ENCODE measurements at regions of chr7 and their contacts with region 1.

Region 1: DNA sequence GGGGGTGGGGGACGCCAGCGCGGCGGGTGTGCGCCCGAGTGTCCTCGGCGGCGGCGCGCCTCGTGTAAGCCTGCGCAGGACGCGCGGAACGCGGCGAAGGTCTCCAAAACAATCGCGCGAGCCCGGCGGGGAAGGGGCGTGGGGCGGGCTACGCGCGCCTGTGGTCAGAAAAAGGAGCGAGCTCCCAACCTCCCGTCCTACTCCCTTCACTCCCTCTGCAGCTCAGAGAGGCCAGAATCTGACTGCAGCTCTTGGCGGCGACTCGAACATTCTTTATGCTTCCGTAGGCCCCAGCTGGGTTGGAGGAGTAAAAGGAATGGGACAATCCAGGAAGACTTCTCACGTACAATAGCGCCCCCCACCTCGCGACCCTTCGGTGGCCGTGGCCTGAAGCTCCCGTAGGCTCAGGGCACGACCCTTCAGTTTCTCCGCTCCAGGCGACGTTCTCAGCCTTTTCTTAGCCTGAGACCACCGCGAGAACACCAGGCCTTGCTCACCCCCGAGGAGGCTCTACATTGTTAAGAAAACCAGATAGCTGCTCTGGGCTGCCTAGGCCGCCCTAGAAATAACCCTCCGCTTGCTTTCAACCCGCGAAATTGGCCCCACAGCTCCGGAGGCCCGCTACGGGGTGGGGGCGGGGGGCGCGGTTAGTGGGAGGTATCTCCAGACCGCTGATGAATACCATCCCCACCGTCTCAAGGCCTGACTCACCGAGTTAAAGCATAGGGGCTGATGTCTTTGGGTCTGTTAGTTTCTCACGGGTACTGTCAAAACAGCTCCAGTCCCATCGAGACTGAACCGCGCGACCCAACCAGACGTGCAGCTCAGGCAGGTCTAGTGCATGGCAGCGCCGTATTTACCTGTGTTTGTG is 3.1 kb downstream of the DLX5 start:
- DNase-seq: no peak
- H3K4me3 Mint-ChIP-seq: no peak overlapping the region
- H3K27ac Mint-ChIP-seq: no peak overlapping the region
- H3K4me1 Mint-ChIP-seq: peaks cover 18% of the 10 kb centered on the region
- H3K27me3 Mint-ChIP-seq: peaks cover 92% of the 10 kb centered on the region

Region 2: GRCh38 chr7:96300502-96300901 is 721.1 kb before region 1 on chr7:
- intact Hi-C with region 1: no loop called
- DNase-seq: no peak
- H3K4me3 Mint-ChIP-seq: no peak overlapping the region
- H3K27ac Mint-ChIP-seq: no peak overlapping the region
- H3K4me1 Mint-ChIP-seq: peaks cover 48% of the 10 kb centered on the region
- H3K27me3 Mint-ChIP-seq: no peaks in the 10 kb centered on the region

Region 3: DNA sequence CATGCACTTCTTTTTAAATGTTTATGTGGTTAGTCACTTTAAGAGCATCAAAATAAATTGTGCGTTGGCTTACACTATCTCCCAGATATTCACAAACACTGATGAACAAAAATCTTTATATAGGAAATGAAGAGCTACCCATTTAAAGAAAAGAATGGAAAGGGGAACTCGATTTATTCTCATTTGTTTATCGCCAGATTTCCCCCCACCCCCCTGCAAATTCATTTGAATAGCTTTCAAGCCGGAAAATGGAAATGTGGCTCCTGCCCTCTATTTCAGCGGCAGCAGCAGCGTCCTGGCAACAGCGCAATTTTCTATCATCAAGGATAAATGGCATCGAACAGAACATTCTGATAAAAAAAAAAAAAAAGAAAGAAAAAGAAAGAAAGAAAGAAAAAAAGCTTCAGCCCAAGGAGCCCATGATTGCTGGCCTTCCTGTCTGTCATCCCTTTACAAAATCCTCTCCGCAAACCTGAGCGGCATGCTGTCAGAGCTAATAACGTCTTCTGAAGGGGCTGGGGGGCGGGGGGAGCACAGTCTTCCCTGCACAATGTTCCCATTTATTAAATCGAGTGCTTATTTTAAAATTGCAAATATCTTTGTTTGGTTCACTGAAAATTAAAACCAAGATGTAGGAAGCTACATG is 29.9 kb before region 1 on chr7:
- intact Hi-C with region 1: loop called (anchors 2 kb)
- DNase-seq: no peak
- H3K4me3 Mint-ChIP-seq: no peak overlapping the region
- H3K27ac Mint-ChIP-seq: no peak overlapping the region
- H3K4me1 Mint-ChIP-seq: no peaks in the 10 kb centered on the region
- H3K27me3 Mint-ChIP-seq: peaks cover 82% of the 10 kb centered on the region

Region 4: DNA sequence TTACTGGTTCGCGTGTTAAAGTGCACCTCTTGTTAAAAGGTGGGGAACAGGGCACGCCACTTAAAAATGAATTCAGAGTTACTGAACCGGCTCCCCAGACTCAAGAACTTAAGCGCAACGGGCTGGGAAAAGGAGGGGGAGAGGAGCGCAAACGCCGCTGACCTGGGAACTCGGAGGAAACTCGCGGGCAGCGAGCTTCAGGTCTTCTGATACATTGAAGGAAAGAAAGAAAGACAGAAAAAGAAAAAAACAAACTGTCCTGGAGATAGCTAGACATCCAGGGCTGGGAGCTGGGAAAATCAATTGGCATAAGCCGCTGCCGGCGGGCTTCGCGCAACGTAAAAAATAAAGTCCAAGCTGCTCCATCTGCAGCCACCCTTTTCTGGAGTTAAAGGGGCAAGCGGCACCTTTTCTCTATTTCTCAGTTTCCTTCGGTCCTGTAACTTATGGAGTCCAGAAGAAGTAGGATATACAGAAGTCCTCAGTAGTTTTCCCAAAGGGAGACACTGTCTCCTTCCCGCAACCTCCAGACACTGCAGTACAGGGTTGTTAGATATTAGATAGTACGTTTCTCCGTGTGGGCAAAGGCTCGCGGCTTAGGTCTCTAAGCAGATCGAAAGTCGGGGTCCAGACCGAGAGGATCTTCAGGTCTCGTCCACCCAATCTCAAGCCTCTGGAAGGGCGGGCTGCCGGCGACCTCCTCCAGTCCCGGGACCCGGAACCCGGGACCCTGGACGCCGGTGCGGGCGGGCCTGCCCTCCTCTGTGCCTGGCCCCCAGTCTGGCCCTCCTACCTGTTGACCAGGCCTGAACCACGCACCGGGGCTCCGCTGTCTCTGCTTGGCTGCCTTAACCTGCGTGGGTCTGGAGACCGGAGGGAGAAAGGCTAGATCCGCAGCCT is 18.0 kb before region 1 on chr7:
- intact Hi-C with region 1: loop called (anchors 1 kb)
- DNase-seq: no peak
- H3K4me3 Mint-ChIP-seq: no peak overlapping the region
- H3K27ac Mint-ChIP-seq: no peak overlapping the region
- H3K4me1 Mint-ChIP-seq: peaks cover 4% of the 10 kb centered on the region
- H3K27me3 Mint-ChIP-seq: peaks cover 85% of the 10 kb centered on the region

Region 5: DNA sequence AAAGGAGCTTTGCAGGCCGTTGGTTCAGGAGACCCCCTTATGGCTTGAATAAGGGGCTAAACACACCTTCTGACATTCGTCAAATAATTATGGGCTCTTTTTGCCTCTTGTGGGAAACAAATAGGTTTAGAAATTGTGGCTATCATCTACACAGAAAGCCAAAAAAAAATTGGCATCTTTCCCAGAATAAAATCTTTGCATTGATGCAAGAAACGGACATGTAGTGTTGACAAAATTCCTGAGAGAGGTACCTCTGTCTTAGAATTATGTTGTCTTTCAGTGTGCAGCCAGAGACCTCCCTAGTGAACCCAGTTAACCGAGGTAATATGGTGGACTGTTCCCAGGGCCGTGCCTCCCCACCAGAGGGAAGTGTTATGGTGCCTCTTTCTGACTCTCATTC is 379.8 kb after region 1 on chr7:
- intact Hi-C with region 1: no loop called
- DNase-seq: no peak
- H3K4me3 Mint-ChIP-seq: no peak overlapping the region
- H3K27ac Mint-ChIP-seq: no peak overlapping the region
- H3K4me1 Mint-ChIP-seq: no peaks in the 10 kb centered on the region
- H3K27me3 Mint-ChIP-seq: no peaks in the 10 kb centered on the region

Measured in activated T-helper 2 cell treated with anti-CD3 and anti-CD28 coated beads, Interferon-gamma antibody, Interleukin-2, Interleukin-4, amounts not matched to agents 10 μg/mL and 5 μg/mL and 100 μg/mL, durations not matched to agents 14 hours and 24 hours and 36 hours (primary cell).